Posterior cingulate gyrus (tissue), 11 donors: ENCODE measurements at regions of chr10 and their contacts with region 1.

Region 1: GRCh38 chr10:51001587-51001986 is 72.7 kb upstream of the PRKG1 start:
- DNase-seq: no peak

Region 2: DNA sequence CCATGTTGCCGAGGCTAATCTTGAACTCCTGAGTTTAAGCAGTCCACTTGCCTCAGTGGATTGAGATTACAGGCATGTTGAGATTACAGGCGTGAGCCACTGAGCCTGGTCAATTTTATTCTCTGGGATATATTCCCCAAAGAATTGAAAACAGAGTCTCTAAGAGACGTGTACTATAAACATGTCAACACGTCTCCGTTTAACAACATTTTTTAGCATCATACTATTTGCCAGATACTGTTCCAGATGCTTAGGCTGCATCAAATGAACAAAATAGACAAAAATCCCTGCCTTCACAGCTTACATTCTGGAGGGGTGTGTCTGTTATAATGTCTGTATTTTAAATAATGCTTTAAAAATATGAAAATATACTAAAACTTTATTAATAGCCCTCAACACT is 18.6 kb after region 1 on chr10:
- intact Hi-C with region 1: no loop called
- DNase-seq: no peak

Region 3: GRCh38 chr10:51231754-51232153 is 230.2 kb after region 1 on chr10:
- intact Hi-C with region 1: no loop called
- DNase-seq: no peak

Region 4: DNA sequence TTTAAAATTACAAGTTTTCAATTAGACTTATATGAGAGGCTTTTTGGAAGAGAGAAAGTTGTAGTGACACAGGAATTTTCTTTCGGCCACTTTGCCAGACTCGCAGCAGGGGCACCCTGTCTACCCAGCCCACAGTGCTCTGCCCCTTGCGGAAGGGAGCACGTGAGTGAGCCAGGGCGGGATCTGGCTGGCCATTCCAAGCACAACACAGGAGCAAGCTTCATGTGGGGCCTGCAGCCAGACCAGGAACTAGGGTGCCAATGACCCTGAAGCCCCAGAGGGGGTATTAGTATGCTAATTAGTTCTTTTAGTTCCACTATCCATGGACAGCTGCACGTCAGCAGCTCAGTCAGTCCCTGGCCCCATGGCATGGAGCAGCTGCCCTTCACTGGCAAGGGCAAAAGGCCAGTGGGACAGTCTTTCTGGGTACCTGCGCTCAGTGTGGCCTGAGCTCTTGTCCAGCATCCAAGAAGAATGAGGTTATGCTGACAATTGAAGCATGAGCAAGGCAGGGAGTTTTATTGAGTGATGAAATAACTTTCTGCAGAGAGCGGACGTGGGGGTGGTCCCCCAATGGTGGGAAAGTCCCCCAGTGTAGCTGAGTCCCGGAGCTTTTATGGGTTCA is 948.9 kb after region 1 on chr10:
- intact Hi-C with region 1: loop called (anchors 10 kb)
- DNase-seq: peak in 1 of 10 donors; percentile 52

Region 5: DNA sequence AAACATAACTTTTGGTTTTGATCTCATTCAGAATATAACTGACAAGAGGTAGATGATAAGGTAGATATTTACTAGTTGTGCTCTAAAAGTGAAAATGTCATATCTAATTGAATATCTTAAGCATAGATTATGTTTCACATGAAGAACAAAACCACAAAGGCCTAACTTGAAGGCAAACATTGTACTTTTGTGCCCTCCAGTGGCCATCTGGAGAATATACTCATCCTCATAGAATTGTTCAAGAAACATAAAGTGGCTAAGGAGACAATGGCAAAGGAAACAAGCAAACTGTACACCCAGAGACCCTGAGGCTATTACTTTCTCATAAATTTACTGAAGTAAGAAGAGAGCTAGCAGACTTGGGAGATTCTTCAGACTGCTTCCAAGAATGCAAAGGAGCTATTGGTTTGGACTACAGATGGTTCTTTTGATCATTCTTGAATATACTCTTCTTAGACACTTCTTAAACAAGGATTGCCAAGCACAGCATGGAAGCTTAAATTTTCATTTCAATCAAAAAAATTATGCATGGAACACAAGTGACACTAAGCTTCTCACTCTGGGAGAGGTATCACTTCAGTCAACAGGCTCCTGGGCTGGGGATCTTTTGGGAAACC is 1214.3 kb after region 1 on chr10:
- intact Hi-C with region 1: loop called (anchors 5 kb)
- DNase-seq: peak in 3 of 10 donors; percentile 27 to 57 (median 44)

Region 6: DNA sequence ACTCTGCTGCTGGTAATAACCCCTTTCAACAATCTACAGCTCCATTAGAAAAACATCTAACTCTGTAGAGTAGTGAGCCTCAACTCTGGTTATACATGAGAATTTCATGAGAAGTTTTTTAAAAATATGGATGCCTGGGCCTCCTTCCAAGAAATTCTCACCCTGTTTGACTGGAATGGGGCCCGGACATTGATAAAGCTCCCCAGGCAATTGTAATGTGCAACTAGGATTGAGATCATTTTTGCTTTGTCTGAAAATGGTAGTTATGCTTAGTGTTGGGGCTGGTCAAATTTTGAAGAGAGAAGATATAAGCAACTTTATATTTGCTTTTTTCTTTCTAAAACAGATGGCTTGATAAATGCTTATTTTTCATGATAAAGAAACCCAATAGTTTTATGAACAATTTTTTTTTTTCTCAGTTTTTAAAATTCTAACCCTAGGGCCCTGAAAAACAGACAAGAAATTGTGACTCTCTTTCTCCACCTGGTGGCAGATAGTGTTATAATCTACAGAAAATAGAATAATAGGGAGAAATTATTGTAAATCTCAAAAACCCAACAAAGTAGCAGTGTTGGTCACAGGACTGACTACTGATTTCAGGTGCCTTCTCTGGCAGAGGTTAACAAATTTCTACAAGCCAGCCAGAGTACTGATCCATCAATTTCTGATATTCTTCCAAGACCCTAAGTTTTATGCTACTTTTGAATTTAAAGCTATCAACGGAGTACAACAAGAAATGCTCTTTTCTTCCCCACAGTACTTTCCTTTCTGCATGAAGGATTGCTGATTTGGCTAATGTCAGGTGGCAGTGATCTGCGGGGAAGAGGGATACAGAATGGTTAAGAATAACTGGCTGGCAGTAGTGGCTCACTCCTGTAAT is 1487.3 kb after region 1 on chr10:
- intact Hi-C with region 1: loop called (anchors 5 kb)
- DNase-seq: no peak